ENCODE measurements at regions of chr15 and their contacts with region 1.

Region 1: GRCh38 chr15:32844118-32844711 is 126.4 kb downstream of the GREM1 start:
- DNase-seq: no peak
- ATAC-seq: no peak
- H3K4me3 ChIP-seq: no peak overlapping the region
- H3K27ac ChIP-seq: no peak overlapping the region
- H3K4me1 ChIP-seq: no peaks in the 10 kb centered on the region
- H3K27me3 ChIP-seq: peaks cover 0 to 8% (median 0%) of the 10 kb centered on the region in 7 donors
- CTCF ChIP-seq: peak in 8 of 9 donors; percentile 19 to 64 (median 53)

Region 2: DNA sequence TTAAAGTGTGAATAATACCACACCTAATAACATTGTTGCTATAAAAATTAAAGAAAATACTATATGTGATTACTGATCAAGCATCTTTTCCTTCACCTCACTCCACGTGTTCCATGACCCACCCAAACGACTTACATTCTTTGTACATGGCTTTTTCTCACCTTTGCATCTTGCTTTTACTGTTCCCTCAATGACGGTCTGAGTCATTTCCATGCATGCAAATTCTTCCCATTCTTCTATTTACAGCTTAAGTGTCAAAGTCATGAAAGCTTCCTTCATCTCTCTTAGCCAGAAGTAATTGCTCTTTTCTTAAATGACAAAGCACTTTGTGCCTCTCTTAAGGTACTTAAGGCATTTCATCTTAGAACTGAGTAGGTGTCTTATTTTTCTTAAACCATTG is 62.4 kb before region 1 on chr15:
- intact Hi-C with region 1: no loop called
- DNase-seq: no peak
- ATAC-seq: no peak
- H3K4me3 ChIP-seq: no peak overlapping the region
- H3K27ac ChIP-seq: no peak overlapping the region
- H3K4me1 ChIP-seq: no peaks in the 10 kb centered on the region
- H3K27me3 ChIP-seq: no peaks in the 10 kb centered on the region
- CTCF ChIP-seq: no peak

Region 3: DNA sequence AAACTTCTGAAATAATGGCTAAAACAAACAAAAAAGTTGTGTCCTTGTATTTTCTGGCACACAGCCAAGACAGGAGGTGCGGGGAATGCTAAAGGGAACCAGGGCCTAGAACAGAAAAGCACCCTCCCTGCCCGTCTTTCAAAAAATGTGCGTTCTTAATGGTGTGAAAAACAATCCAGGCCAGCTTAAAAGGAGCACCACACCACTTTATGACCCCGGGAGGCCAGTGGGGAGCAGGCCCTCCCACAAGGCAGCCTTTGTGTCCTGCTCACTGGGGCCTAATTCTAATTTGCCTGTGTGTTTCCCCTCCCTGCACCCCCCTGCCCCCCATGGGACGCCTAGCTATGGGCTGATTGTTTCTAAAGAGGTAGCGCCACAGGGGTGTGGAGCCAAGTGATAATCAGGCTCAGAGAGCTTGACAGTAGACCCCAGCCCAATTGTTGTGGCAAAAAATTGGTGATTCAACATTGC is 54.9 kb after region 1 on chr15:
- intact Hi-C with region 1: no loop called
- DNase-seq: no peak
- ATAC-seq: no peak
- H3K4me3 ChIP-seq: no peak overlapping the region
- H3K27ac ChIP-seq: no peak overlapping the region
- H3K4me1 ChIP-seq: no peaks in the 10 kb centered on the region
- H3K27me3 ChIP-seq: no peaks in the 10 kb centered on the region
- CTCF ChIP-seq: no peak

Region 4: DNA sequence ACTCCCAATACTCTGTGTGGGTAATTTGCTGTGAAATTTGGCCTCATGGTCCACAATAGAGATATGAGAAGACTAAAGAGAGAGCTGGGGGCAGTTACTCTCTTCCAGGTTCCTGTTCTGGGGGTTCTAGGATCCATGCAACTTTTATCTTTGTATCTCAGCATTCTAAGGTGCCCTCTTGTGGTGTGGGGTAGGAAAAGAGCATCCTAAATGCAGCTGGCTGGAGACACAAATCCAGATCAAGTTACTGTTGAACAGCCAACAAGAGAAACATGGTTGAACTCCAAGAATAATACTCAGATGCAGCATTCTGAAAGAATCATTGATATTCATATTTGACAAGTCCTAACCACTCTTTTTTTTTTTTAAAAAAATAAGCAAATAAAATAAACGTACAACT is 111.8 kb after region 1 on chr15:
- intact Hi-C with region 1: loop called in 1 of 10 experiments (anchors 10 kb)
- DNase-seq: no peak
- ATAC-seq: peak in 2 of 8 donors; percentile 29 to 34
- H3K4me3 ChIP-seq: no peak overlapping the region
- H3K27ac ChIP-seq: no peak overlapping the region
- H3K4me1 ChIP-seq: peaks cover 0 to 8% (median 0%) of the 10 kb centered on the region in 9 donors
- H3K27me3 ChIP-seq: no peaks in the 10 kb centered on the region
- CTCF ChIP-seq: peak in 7 of 9 donors; percentile 26 to 46 (median 34)

Measured in heart right ventricle (tissue), 16 donors.